Colonic mucosa (tissue), 4 donors: ENCODE measurements at regions of chr17 and their contacts with region 1.

Region 1: DNA sequence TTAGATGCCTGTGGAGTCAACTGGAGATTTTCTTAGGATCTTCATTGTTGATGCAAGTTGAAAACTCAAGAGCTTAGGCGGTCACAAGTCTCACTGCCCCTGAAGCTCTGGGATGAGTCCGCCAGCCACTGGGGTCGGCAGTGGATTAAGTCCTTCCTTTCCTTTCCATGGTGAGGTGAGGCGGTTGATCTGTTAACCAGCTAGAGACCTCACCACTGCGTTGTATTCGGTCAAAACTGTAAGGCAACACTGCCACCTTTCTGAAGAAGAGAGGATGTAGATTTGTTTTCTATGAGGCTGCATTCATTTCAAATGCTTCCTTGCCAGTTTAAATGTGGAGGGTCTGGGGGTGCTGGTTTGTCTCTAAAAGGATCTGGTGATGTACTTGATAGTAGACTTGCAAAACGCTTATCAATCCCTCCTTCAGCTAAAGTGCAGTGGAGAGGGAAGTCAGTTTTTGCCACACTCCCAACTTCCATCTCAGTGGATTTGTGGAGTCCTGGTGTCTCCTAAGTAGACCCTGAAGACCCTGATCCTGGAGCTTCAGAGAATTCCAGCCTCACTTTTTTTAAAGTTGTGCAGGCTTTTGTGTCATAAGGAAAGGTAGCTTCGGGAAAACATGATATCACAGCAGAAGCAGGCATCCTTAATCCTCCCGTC is 1.7 kb downstream of the MYOCD start:
- DNase-seq: no peak
- H3K4me3 ChIP-seq: peak overlapping the region; percentile 7
- H3K27ac ChIP-seq: no peak overlapping the region
- H3K4me1 ChIP-seq: no peaks in the 10 kb centered on the region
- H3K27me3 ChIP-seq: peaks cover 24% of the 10 kb centered on the region
- CTCF ChIP-seq: peak; percentile 14

Region 2: GRCh38 chr17:12180644-12181261 is 486.7 kb before region 1 on chr17:
- intact Hi-C with region 1: loop called (anchors 10 kb)
- DNase-seq: peak; percentile 39
- H3K4me3 ChIP-seq: no peak overlapping the region
- H3K27ac ChIP-seq: no peak overlapping the region
- H3K4me1 ChIP-seq: no peaks in the 10 kb centered on the region
- H3K27me3 ChIP-seq: no peaks in the 10 kb centered on the region
- CTCF ChIP-seq: peak; percentile 58

Region 3: DNA sequence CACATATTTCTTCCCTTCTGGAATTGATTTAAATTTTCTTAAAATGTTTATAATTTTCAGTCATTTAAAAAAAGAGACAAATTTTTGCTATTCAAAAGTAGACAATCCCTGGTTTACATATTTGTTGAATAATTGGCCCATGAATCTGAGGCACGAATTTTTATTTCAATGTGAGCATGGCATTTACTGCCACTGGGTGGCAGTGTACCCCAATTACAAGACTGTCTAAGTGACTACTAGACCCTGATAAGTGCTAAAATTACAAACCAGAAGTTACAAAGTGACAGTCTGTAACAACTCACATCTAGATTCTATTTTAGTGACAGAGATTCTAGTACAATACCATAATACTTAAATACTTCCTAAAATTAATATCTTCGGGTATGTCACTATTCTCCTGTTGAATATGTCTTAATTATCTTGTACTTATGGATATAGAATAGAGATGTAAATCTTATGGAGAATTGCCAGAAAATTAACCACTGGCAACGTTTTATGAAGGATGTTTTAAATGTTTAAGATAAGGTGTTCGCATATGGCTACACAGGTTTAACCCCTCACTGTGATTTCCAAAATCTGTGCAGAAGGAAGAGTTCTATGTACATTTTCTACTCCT is 410.9 kb before region 1 on chr17:
- intact Hi-C with region 1: loop called (anchors 2 kb)
- DNase-seq: peak; percentile 35
- H3K4me3 ChIP-seq: no peak overlapping the region
- H3K27ac ChIP-seq: no peak overlapping the region
- H3K4me1 ChIP-seq: no peaks in the 10 kb centered on the region
- H3K27me3 ChIP-seq: no peaks in the 10 kb centered on the region
- CTCF ChIP-seq: peak; percentile 66

Region 4: GRCh38 chr17:12342609-12343435 is 324.6 kb before region 1 on chr17:
- intact Hi-C with region 1: loop called (anchors 10 kb)
- DNase-seq: peak; percentile 60
- H3K4me3 ChIP-seq: no peak overlapping the region
- H3K27ac ChIP-seq: no peak overlapping the region
- H3K4me1 ChIP-seq: no peaks in the 10 kb centered on the region
- H3K27me3 ChIP-seq: no peaks in the 10 kb centered on the region
- CTCF ChIP-seq: peak; percentile 34

Region 5: GRCh38 chr17:12545877-12546513 is 121.4 kb before region 1 on chr17:
- intact Hi-C with region 1: loop called (anchors 5 kb)
- DNase-seq: peak; percentile 47
- H3K4me3 ChIP-seq: no peak overlapping the region
- H3K27ac ChIP-seq: no peak overlapping the region
- H3K4me1 ChIP-seq: no peaks in the 10 kb centered on the region
- H3K27me3 ChIP-seq: no peaks in the 10 kb centered on the region
- CTCF ChIP-seq: peak; percentile 68